Ascending aorta (tissue), 2 donors: ENCODE measurements at regions of chr17 and their contacts with region 1.

Region 1: GRCh38 chr17:48037036-48037837 is at the start of gene COPZ2:
- DNase-seq: peak; percentile 21 to 88
- H3K4me3 ChIP-seq: peak within 1 kb of the TSS; percentile 67 to 69
- H3K27ac ChIP-seq: peak within 1 kb of the TSS; percentile 77 to 83
- H3K4me1 ChIP-seq: peaks cover 5 to 9% of the 10 kb centered on the region in 2 donors
- H3K27me3 ChIP-seq: no peaks in the 10 kb centered on the region
- CTCF ChIP-seq: peak; percentile 40 to 56 (median 50)
- total RNA-seq, gene COPZ2: 155 TPM

Region 2: GRCh38 chr17:47999582-47999981 is 37.7 kb before region 1 on chr17:
- intact Hi-C with region 1: no loop called
- DNase-seq: no peak
- H3K4me3 ChIP-seq: no peak overlapping the region
- H3K27ac ChIP-seq: no peak overlapping the region
- H3K4me1 ChIP-seq: peaks cover 0 to 5% of the 10 kb centered on the region in 2 donors
- H3K27me3 ChIP-seq: peaks cover 6% of the 10 kb centered on the region
- CTCF ChIP-seq: no peak

Region 3: GRCh38 chr17:48054238-48055185 is 17.3 kb after region 1 on chr17:
- intact Hi-C with region 1: loop called (anchors 2 kb)
- DNase-seq: no peak
- H3K4me3 ChIP-seq: peak overlapping the region; percentile 37 to 88
- H3K27ac ChIP-seq: peak overlapping the region; percentile 90 to 95
- H3K4me1 ChIP-seq: peaks cover 43 to 62% of the 10 kb centered on the region in 2 donors
- H3K27me3 ChIP-seq: no peaks in the 10 kb centered on the region
- CTCF ChIP-seq: no peak

Region 4: GRCh38 chr17:48074315-48075081 is 37.3 kb after region 1 on chr17:
- intact Hi-C with region 1: loop called (anchors 1 kb)
- DNase-seq: peak in 1 of 2 donors; percentile 92
- H3K4me3 ChIP-seq: no peak overlapping the region
- H3K27ac ChIP-seq: peak overlapping the region in 1 of 2 donors; percentile 34
- H3K4me1 ChIP-seq: no peaks in the 10 kb centered on the region
- H3K27me3 ChIP-seq: no peaks in the 10 kb centered on the region
- CTCF ChIP-seq: peak; percentile 67 to 83 (median 82)